Transverse colon (tissue), 4 donors: ENCODE measurements at regions of chr10 and their contacts with region 1.

Region 1: GRCh38 chr10:50497757-50498156 is 126.0 kb downstream of the SGMS1 start:
- DNase-seq: no peak
- H3K4me3 ChIP-seq: no peak overlapping the region
- H3K27ac ChIP-seq: peak overlapping the region in 1 of 4 donors; percentile 18
- H3K4me1 ChIP-seq: peaks cover 0 to 12% (median 3%) of the 10 kb centered on the region in 4 donors
- H3K27me3 ChIP-seq: no peaks in the 10 kb centered on the region
- CTCF ChIP-seq: no peak
- EP300 ChIP-seq: no peak
- POLR2A ChIP-seq: no peak

Region 2: GRCh38 chr10:50470345-50470744 is 27.4 kb before region 1 on chr10:
- in situ Hi-C with region 1: no loop called
- intact Hi-C with region 1: loop called (anchors 1 kb)
- DNase-seq: no peak
- H3K4me3 ChIP-seq: no peak overlapping the region
- H3K27ac ChIP-seq: peak overlapping the region; percentile 56 to 67 (median 60)
- H3K4me1 ChIP-seq: peaks cover 11 to 42% (median 27%) of the 10 kb centered on the region in 4 donors
- H3K27me3 ChIP-seq: no peaks in the 10 kb centered on the region
- CTCF ChIP-seq: no peak
- EP300 ChIP-seq: no peak
- POLR2A ChIP-seq: no peak